Activated CD8-positive, alpha-beta memory T cell treated with anti-CD3 and anti-CD28 coated beads, Interleukin-2, amount 10 ng/mL, durations not matched to agents 7 days and 5 days (primary cell): ENCODE measurements at regions of chr1 and their contacts with region 1.

Region 1: DNA sequence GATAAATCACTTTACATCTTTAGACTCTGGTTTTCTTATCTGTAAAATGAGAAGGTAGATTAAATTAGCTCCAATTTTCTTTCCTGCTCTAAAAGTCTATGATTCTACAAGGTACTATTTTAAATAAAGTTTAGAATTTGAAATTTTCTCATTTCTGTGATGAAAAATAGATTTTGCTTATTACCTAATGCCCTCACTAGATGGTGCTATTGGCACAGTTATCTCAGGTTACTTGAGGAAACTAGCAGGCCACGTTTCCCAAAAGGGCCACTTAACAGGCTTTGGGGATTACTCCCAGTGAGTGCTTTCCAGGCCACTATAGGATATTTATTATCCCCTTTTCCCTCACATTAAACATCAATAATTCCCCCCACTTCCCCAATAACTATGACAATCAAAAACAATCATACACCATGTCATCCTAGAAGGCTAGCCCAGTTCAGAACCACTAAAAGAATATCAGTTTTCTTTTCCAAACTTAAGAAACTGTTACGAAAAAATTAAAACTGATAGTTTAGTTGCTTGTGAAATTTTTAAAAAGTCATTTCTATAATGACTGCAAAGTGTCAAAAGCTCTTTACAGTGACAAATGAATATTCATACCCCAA is 30.6 kb downstream of the OMA1 start:
- DNase-seq: no peak
- ATAC-seq: peak; percentile 33
- H3K4me3 Mint-ChIP-seq: no peak overlapping the region
- H3K27ac Mint-ChIP-seq: no peak overlapping the region
- H3K4me1 Mint-ChIP-seq: peaks cover 12% of the 10 kb centered on the region
- H3K27me3 Mint-ChIP-seq: no peaks in the 10 kb centered on the region

Region 2: GRCh38 chr1:58528518-58528917 is 12.6 kb after region 1 on chr1:
- CTCF ChIA-PET with region 1: interaction called, 12 read pairs
- DNase-seq: no peak
- ATAC-seq: no peak
- H3K4me3 Mint-ChIP-seq: no peak overlapping the region
- H3K27ac Mint-ChIP-seq: no peak overlapping the region
- H3K4me1 Mint-ChIP-seq: peaks cover 17% of the 10 kb centered on the region
- H3K27me3 Mint-ChIP-seq: no peaks in the 10 kb centered on the region

Region 3: DNA sequence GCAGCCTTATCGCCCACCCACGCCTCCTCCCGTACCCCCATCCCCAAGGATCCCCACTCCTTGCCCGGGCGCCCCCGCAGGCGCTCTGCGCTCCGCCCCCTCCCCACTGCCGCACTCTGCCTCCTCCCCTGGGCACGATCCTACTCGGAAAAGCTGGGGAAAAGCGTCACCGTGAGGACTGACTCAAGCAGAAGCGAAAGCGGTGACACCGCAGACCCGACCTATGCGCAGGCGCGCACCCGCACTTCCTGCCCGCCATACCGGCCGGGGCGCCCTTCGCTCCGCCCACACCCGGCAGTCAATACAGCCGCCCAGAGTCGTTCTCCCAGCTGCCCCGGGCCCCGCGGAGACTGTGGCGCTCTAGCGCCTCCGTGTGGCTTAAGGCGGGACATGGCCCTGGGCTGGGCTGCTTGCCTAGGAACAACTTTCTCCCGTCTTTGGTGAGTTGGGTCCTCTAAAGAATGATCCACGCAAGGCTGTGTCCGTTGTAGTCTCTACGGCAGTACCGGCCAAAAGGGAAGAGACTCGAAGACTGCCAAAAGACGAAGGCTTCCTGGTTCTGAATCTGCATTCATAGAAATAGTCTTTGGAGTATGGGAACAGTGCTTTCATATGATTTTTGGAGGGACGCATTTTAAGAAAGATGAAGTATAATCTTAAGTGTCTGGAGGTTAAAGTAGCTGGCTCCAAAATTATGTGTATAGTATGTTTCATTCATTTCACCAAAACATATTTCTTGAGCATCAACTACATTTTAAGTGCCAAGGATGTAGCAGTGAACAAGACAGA is 30.8 kb after region 1 on chr1 and contains the start of gene OMA1:
- CTCF ChIA-PET with region 1: interaction called, 55 read pairs
- DNase-seq: peak; percentile 98
- ATAC-seq: peak; percentile 97
- H3K4me3 Mint-ChIP-seq: peak within 1 kb of the TSS; percentile 93
- H3K27ac Mint-ChIP-seq: peak within 1 kb of the TSS; percentile 92
- H3K4me1 Mint-ChIP-seq: peaks cover 24% of the 10 kb centered on the region
- H3K27me3 Mint-ChIP-seq: peaks cover 5% of the 10 kb centered on the region
- total RNA-seq, gene OMA1: 24.9 to 26.0 TPM

Region 4: DNA sequence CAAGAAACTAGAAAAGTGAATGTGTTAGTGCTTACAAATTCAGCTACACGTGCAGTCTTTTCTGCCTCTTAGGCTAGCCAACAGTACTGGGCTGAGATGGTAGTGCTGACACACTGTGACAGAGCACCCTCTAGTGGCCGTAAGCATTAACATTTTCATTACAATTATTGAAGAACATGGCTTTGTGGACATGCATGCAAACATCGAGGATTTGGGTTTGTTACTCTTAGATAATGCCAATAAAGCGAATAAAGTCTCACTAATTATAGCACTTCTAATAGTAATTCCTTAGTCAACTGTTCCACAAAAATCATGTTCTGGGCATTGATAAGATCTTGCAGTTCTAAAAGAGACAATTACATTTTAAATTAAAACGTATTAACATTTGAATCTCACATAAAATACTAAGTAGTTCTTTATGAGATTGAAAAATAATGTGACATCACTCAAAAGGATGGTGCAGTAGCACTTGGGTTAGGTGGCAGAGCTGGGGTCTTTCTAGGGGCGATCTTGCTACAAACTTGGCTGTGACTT is 136.8 kb after region 1 on chr1:
- CTCF ChIA-PET with region 1: interaction called, 48 read pairs
- DNase-seq: peak; percentile 72
- ATAC-seq: peak; percentile 92
- H3K4me3 Mint-ChIP-seq: no peak overlapping the region
- H3K27ac Mint-ChIP-seq: no peak overlapping the region
- H3K4me1 Mint-ChIP-seq: peaks cover 16% of the 10 kb centered on the region
- H3K27me3 Mint-ChIP-seq: no peaks in the 10 kb centered on the region